B cell (primary cell): ENCODE measurements at regions of chr15 and their contacts with region 1.

Region 1: GRCh38 chr15:67156426-67156825 is 91.0 kb downstream of the SMAD3 start:
- DNase-seq: no peak
- ATAC-seq: no peak
- H3K4me3 ChIP-seq: no peak overlapping the region
- H3K4me3 Mint-ChIP-seq: no peak overlapping the region
- H3K27ac ChIP-seq: no peak overlapping the region
- H3K27ac Mint-ChIP-seq: no peak overlapping the region
- H3K4me1 ChIP-seq: peaks cover 30 to 41% of the 10 kb centered on the region in 2 donors
- H3K4me1 Mint-ChIP-seq: peaks cover 76% of the 10 kb centered on the region
- H3K27me3 ChIP-seq: no peaks in the 10 kb centered on the region
- H3K27me3 Mint-ChIP-seq: no peaks in the 10 kb centered on the region
- CTCF ChIP-seq: no peak

Region 2: DNA sequence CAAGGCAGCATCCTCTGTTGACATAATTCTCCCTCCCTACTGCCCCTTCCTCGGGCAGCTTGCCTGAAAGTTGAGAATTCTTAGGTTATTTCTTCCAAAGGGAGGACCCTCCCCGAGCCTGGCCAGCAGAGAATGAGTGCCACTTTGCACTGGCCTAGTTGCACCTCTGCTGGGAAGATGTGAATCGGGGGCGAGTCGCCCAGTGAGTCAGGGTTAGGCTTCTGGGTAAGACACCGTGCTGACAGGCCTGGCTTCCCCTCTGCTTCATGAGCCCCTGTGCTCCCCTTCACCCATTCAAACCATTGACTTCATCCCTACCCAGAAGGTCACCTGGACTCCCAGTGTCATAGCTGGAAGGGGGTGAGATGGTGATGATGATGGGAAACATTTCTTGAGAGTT is 15.7 kb after region 1 on chr15:
- CTCF ChIA-PET with region 1: no interaction called
- POLR2A ChIA-PET with region 1: no interaction called
- intact Hi-C with region 1: loop called (anchors 2 kb)
- DNase-seq: no peak
- ATAC-seq: no peak
- H3K4me3 ChIP-seq: no peak overlapping the region
- H3K4me3 Mint-ChIP-seq: no peak overlapping the region
- H3K27ac ChIP-seq: no peak overlapping the region
- H3K27ac Mint-ChIP-seq: peak overlapping the region; percentile 7
- H3K4me1 ChIP-seq: peaks cover 0 to 21% of the 10 kb centered on the region in 2 donors
- H3K4me1 Mint-ChIP-seq: peaks cover 45% of the 10 kb centered on the region
- H3K27me3 ChIP-seq: no peaks in the 10 kb centered on the region
- H3K27me3 Mint-ChIP-seq: no peaks in the 10 kb centered on the region
- CTCF ChIP-seq: no peak

Region 3: DNA sequence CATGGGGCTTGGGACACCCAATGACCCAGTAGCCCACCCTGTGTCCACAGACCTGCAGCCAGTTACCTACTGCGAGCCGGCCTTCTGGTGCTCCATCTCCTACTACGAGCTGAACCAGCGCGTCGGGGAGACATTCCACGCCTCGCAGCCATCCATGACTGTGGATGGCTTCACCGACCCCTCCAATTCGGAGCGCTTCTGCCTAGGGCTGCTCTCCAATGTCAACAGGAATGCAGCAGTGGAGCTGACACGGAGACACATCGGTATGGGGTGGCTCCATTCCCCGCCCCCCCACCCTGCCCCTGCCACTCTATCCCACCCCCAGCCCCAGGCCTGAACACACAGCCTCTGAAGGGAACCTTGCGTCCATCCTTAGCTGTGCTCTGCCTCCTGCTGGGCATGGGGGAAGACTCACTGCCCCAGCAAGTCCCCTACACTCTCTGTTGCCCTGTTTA is 24.8 kb after region 1 on chr15:
- CTCF ChIA-PET with region 1: interaction called, 3 read pairs
- POLR2A ChIA-PET with region 1: interaction called, 10 read pairs
- intact Hi-C with region 1: no loop called
- DNase-seq: no peak
- ATAC-seq: peak; percentile 47
- H3K4me3 ChIP-seq: no peak overlapping the region
- H3K4me3 Mint-ChIP-seq: no peak overlapping the region
- H3K27ac ChIP-seq: no peak overlapping the region
- H3K27ac Mint-ChIP-seq: peak overlapping the region; percentile 46
- H3K4me1 ChIP-seq: peaks cover 0 to 3% of the 10 kb centered on the region in 2 donors
- H3K4me1 Mint-ChIP-seq: peaks cover 21% of the 10 kb centered on the region
- H3K27me3 ChIP-seq: no peaks in the 10 kb centered on the region
- H3K27me3 Mint-ChIP-seq: no peaks in the 10 kb centered on the region
- CTCF ChIP-seq: no peak